ENCODE measurements at regions of chr10 and their contacts with region 1.

Region 1: DNA sequence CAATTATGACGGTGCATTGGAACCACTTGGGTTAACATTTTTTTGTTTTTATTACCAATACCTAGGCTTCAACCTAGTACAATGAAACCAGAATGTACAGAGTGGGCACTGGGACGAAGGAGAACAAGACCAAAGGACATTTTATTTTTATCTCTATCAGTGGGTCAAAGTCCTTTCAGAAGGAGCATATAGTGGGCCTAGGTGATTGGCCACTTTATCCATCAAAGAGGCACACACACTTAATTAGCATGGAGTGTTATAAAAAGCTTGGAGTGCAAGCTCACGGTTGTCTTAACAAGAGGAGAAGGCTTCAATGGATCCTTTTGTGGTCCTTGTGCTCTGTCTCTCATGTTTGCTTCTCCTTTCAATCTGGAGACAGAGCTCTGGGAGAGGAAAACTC is at the start of gene CYP2C19:
- DNase-seq: no peak
- H3K4me3 ChIP-seq: no peak within 1 kb of the TSS
- H3K27ac ChIP-seq: no peak within 1 kb of the TSS
- H3K4me1 ChIP-seq: no peaks in the 10 kb centered on the region
- H3K27me3 ChIP-seq: no peaks in the 10 kb centered on the region
- CTCF ChIP-seq: no peak
- EP300 ChIP-seq: no peak
- POLR2A ChIP-seq: no peak
- total RNA-seq, gene CYP2C19: 2.6 to 9.7 (median 8.2) TPM

Region 2: DNA sequence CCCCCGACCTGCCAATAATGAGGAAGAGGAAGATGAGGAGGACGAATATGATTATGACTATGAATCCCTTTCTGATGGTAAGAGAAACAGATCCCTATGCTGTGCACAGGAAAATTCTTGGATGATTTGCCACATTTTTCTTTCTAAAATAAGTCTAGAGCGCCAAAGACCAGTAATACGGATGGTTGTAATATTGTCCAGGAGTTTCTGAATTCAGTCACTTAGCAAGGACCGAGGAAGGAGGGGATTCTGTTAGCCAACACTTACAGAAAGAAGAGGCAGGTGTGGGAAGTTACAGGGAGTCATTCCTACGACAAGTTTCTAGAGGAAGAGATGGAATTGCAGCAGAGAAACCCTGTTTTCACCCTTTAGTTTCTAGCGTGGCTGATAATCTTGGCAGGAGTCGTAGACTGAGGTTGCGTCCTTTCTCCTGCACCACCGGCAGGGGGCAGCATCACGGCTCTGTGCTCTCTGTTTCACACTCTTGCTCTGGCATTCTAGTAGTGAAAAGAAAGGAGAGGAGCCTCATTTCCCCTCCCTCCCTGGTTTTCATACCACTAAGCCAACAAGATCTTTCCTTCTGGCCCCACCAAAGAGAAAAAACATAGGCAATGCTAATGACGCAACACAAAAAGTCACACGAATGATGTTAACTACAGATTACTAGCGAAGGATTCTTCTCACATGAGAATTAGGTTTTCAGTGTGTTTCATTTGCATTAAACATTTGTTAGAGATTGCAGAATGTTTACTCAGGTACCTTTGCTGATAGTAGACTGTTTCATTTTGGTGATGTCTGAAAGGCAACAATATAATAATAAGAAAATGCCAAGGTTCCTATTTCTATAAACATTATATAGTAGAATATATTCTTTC is 482.3 kb before region 1 on chr10:
- in situ Hi-C with region 1: no loop called
- intact Hi-C with region 1: loop called (anchors 5 kb)
- DNase-seq: peak; percentile 46
- H3K4me3 ChIP-seq: no peak overlapping the region
- H3K27ac ChIP-seq: no peak overlapping the region
- H3K4me1 ChIP-seq: peaks cover 0 to 6% (median 2%) of the 10 kb centered on the region in 4 donors
- H3K27me3 ChIP-seq: no peaks in the 10 kb centered on the region
- CTCF ChIP-seq: peak; percentile 66 to 86 (median 80)
- EP300 ChIP-seq: no peak
- POLR2A ChIP-seq: no peak

Region 3: DNA sequence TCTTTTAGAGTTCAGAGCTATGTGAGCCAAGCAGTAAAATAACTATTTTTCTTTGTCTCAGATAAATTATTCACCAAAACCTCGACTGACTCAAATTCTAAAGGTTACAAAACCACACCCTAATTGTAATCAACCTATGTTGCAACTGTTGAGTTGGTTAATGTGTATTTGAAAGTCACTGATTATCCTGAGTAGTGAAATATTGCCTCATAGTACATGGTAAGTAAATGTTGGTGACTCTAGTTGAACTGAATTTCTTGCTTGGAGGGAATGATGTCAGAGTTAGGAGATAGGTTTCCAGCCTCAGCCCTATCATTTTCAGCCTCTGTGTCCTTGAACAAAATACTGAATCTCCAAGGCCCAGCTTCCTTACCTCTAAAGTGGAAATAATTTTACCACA is 81.8 kb before region 1 on chr10:
- in situ Hi-C with region 1: no loop called
- intact Hi-C with region 1: no loop called
- DNase-seq: no peak
- H3K4me3 ChIP-seq: no peak overlapping the region
- H3K27ac ChIP-seq: peak overlapping the region; percentile 51 to 70 (median 64)
- H3K4me1 ChIP-seq: peaks cover 0 to 44% (median 11%) of the 10 kb centered on the region in 4 donors
- H3K27me3 ChIP-seq: no peaks in the 10 kb centered on the region
- CTCF ChIP-seq: no peak
- EP300 ChIP-seq: no peak
- POLR2A ChIP-seq: no peak

Region 4: GRCh38 chr10:95221124-95221523 is 458.7 kb after region 1 on chr10:
- in situ Hi-C with region 1: no loop called
- intact Hi-C with region 1: no loop called
- DNase-seq: no peak
- H3K4me3 ChIP-seq: no peak overlapping the region
- H3K27ac ChIP-seq: no peak overlapping the region
- H3K4me1 ChIP-seq: no peaks in the 10 kb centered on the region
- H3K27me3 ChIP-seq: no peaks in the 10 kb centered on the region
- CTCF ChIP-seq: no peak
- EP300 ChIP-seq: no peak
- POLR2A ChIP-seq: no peak